ENCODE measurements at regions of chr14 and their contacts with region 1.

Region 1: GRCh38 chr14:102046343-102047278 is 40.2 kb downstream of the HSP90AA1 start:
- DNase-seq: peak; percentile 93
- H3K4me3 ChIP-seq: no peak overlapping the region
- H3K27ac ChIP-seq: peak overlapping the region; percentile 28 to 67 (median 39)
- H3K4me1 ChIP-seq: peaks cover 0 to 23% (median 11%) of the 10 kb centered on the region in 4 donors
- H3K27me3 ChIP-seq: no peaks in the 10 kb centered on the region
- CTCF ChIP-seq: peak in 3 of 4 experiments; percentile 35 to 50 (median 39)
- EP300 ChIP-seq: no peak
- POLR2A ChIP-seq: no peak

Region 2: GRCh38 chr14:101980251-101981099 is 66.1 kb before region 1 on chr14:
- intact Hi-C with region 1: loop called (anchors 5 kb)
- DNase-seq: peak; percentile 94
- H3K4me3 ChIP-seq: no peak overlapping the region
- H3K27ac ChIP-seq: peak overlapping the region; percentile 65 to 88 (median 84)
- H3K4me1 ChIP-seq: peaks cover 0 to 20% (median 11%) of the 10 kb centered on the region in 4 donors
- H3K27me3 ChIP-seq: no peaks in the 10 kb centered on the region
- CTCF ChIP-seq: no peak
- EP300 ChIP-seq: peak in 2 of 4 donors; percentile 60 to 90
- POLR2A ChIP-seq: no peak

Measured in sigmoid colon (tissue), 7 donors.